ENCODE measurements at regions of chr7 and their contacts with region 1.

Region 1: GRCh38 chr7:20330240-20330927 is at the start of gene ITGB8:
- DNase-seq: peak; percentile 92
- H3K4me3 Mint-ChIP-seq: peak within 1 kb of the TSS; percentile 81
- H3K27ac Mint-ChIP-seq: peak within 1 kb of the TSS; percentile 96
- H3K4me1 Mint-ChIP-seq: peaks cover 11% of the 10 kb centered on the region
- H3K27me3 Mint-ChIP-seq: no peaks in the 10 kb centered on the region
- CTCF ChIP-seq: no peak
- total RNA-seq, gene ITGB8: 25.0 and 38.1 TPM in 2 replicates

Region 2: DNA sequence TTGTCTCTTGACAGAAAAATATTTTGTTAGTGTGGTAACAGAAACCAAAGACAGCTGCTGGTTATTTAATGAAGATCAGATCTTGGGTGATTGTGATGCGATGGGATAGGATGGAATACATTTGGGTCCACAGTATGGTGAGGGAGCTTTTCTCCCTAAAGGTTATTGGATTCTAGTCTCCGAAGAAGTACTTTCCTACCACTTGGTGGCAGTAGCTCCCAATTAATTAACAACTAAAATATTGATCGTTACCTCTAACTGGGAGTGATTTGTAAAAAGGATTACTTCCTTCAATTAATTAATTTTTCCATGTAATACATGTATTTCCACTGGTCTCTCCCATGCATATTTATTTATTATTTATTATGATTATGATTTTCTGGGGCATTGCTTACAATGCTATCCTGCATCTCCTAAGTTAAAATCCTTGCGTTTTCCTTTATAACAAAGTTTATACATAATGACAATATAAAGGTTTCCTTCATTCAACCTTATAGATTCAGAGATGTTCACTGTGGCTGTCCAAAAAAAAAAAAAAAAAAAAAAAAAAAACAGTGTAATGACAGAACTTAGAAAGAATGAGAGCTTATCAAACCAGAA is 582.5 kb before region 1 on chr7:
- CTCF ChIA-PET with region 1: interaction called, 11 read pairs
- POLR2A ChIA-PET with region 1: no interaction called
- intact Hi-C with region 1: loop called (anchors 5 kb)
- DNase-seq: peak; percentile 59
- H3K4me3 Mint-ChIP-seq: no peak overlapping the region
- H3K27ac Mint-ChIP-seq: no peak overlapping the region
- H3K4me1 Mint-ChIP-seq: peaks cover 9% of the 10 kb centered on the region
- H3K27me3 Mint-ChIP-seq: no peaks in the 10 kb centered on the region
- CTCF ChIP-seq: peak; percentile 66

Region 3: DNA sequence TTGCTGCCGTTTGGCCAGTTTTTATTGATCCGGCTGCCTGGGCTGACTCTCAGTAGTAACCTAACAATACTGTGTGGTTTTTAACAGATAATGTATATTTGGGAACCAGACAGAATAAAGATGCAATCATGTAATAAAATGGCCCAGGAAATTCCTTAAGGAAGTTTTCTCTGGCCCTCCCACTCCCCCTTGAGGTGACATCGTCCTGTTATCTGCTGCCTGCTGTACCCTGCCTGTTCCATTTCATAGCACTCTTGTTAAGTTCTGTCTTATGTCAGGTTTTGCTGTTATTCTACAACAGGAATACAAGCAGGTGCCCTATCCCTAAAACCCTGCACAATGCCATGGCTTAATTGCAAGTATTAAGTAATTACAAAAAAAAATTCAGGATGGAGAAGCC is 12.8 kb after region 1 on chr7:
- CTCF ChIA-PET with region 1: interaction called, 5 read pairs
- POLR2A ChIA-PET with region 1: interaction called, 505 read pairs
- intact Hi-C with region 1: no loop called
- DNase-seq: no peak
- H3K4me3 Mint-ChIP-seq: no peak overlapping the region
- H3K27ac Mint-ChIP-seq: no peak overlapping the region
- H3K4me1 Mint-ChIP-seq: peaks cover 25% of the 10 kb centered on the region
- H3K27me3 Mint-ChIP-seq: no peaks in the 10 kb centered on the region
- CTCF ChIP-seq: no peak

Region 4: GRCh38 chr7:20365486-20365885 is 35.1 kb after region 1 on chr7:
- CTCF ChIA-PET with region 1: interaction called, 4 read pairs
- POLR2A ChIA-PET with region 1: interaction called, 505 read pairs
- intact Hi-C with region 1: loop called (anchors 1 kb)
- DNase-seq: peak; percentile 97
- H3K4me3 Mint-ChIP-seq: no peak overlapping the region
- H3K27ac Mint-ChIP-seq: peak overlapping the region; percentile 92
- H3K4me1 Mint-ChIP-seq: peaks cover 43% of the 10 kb centered on the region
- H3K27me3 Mint-ChIP-seq: no peaks in the 10 kb centered on the region
- CTCF ChIP-seq: no peak

Region 5: GRCh38 chr7:20440472-20441105 is 110.2 kb after region 1 on chr7:
- CTCF ChIA-PET with region 1: no interaction called
- POLR2A ChIA-PET with region 1: interaction called, 3 read pairs
- intact Hi-C with region 1: loop called (anchors 2 kb)
- DNase-seq: peak; percentile 63
- H3K4me3 Mint-ChIP-seq: no peak overlapping the region
- H3K27ac Mint-ChIP-seq: no peak overlapping the region
- H3K4me1 Mint-ChIP-seq: no peaks in the 10 kb centered on the region
- H3K27me3 Mint-ChIP-seq: no peaks in the 10 kb centered on the region
- CTCF ChIP-seq: peak; percentile 56

Region 6: GRCh38 chr7:20598459-20599309 is 268.3 kb after region 1 on chr7:
- CTCF ChIA-PET with region 1: interaction called, 54 read pairs
- POLR2A ChIA-PET with region 1: interaction called, 18 read pairs
- intact Hi-C with region 1: loop called (anchors 1 kb)
- DNase-seq: peak; percentile 72
- H3K4me3 Mint-ChIP-seq: no peak overlapping the region
- H3K27ac Mint-ChIP-seq: no peak overlapping the region
- H3K4me1 Mint-ChIP-seq: peaks cover 15% of the 10 kb centered on the region
- H3K27me3 Mint-ChIP-seq: no peaks in the 10 kb centered on the region
- CTCF ChIP-seq: peak; percentile 83